GM10248 (cell line): ENCODE measurements at regions of chr3 and their contacts with region 1.

Region 1: DNA sequence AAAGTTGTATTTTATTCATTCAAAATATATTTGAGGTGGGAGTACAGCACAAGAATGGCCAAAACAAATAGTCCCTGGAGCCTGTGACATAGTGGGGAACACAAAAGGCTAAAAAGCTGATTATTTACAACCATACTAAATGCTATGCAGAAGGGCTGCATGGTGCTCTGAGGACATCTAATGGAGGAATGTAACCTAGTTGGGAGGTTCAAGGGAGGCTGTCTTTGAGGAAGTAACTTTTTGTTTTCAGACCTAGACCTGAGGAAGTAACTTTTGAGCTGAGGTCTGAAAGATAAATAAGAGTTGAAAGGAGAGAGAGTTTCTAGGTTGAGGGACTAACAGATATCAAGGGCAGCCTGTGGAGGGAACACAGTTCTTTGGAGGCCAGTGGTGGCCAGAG is 34.8 kb upstream of the RASA2 start:
- DNase-seq: peak; percentile 67
- CTCF ChIP-seq: peak; percentile 80

Region 2: DNA sequence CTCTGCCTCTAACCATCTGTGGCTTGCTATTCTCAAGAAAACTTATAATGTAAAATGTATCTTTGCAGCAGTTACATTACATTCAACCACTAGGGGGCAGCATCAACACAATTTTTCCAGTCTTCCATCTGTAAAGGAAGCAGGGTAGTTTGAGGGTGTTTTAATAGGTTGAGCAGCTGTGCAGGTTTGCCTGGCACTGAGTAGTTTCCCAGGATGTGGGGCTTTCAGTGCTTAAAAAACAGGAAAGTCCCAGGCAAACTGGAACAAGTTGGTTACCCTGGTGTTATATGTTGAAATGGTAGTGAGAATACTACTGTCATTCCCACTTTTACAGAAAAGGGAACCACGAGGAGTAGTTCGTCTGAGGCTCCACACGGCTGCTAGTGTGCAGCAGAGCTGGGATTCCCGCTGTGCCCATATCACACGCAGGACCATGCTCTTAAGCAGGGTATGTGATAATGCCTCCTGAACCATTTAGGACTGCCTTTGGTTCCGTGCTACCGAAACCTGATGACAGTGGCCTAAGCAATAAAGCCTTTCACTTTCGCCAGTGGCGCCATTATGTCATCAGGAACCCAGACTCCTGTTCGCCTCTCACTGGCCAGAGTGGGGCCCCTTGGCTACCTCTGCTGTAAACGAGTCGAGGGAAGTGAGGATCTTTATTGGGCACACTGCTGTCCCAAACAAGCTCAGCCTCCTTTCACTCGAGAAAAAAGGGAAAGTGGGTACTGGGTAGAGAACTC is 148.4 kb before region 1 on chr3:
- CTCF ChIA-PET with region 1: interaction called, 398 read pairs
- POLR2A ChIA-PET with region 1: no interaction called
- DNase-seq: peak; percentile 78
- CTCF ChIP-seq: peak; percentile 63

Region 3: GRCh38 chr3:141331377-141332318 is 120.4 kb before region 1 on chr3:
- CTCF ChIA-PET with region 1: interaction called, 12 read pairs
- POLR2A ChIA-PET with region 1: no interaction called
- DNase-seq: no peak
- CTCF ChIP-seq: no peak

Region 4: GRCh38 chr3:141360888-141361598 is 91.0 kb before region 1 on chr3:
- CTCF ChIA-PET with region 1: interaction called, 80 read pairs
- POLR2A ChIA-PET with region 1: no interaction called
- DNase-seq: peak; percentile 72
- CTCF ChIP-seq: peak; percentile 70

Region 5: GRCh38 chr3:141386611-141387111 is 65.4 kb before region 1 on chr3:
- CTCF ChIA-PET with region 1: interaction called, 16 read pairs
- POLR2A ChIA-PET with region 1: no interaction called
- DNase-seq: no peak
- CTCF ChIP-seq: no peak

Region 6: DNA sequence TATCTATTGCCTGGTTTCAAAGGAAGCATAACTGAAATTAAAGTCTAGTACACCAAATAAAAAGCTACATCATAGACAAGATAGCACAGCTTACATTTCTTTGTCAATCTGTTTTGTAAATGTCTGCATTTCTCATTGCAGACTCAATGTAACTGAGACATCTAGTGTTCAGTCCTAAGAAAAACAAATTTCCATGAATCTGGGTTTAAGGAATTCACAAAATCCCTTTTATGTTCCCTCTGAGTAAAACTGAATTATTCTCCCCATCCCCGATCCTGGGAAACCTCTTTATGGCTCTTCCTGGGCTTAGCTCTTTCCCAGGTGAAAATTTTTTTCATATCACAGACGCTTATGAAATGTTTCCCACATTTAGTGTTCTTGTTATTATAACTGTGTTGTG is 13.2 kb after region 1 on chr3:
- CTCF ChIA-PET with region 1: interaction called, 16 read pairs
- POLR2A ChIA-PET with region 1: no interaction called
- DNase-seq: no peak
- CTCF ChIP-seq: no peak

Region 7: GRCh38 chr3:141487521-141488252 is 35.7 kb after region 1 on chr3:
- CTCF ChIA-PET with region 1: interaction called, 17 read pairs
- POLR2A ChIA-PET with region 1: no interaction called
- DNase-seq: peak; percentile 77
- CTCF ChIP-seq: no peak